ENCODE measurements at regions of chr10 and their contacts with region 1.

Region 1: GRCh38 chr10:16843252-16843870 is 26.1 kb upstream of the RSU1 start:
- DNase-seq: no peak
- ATAC-seq: peak; percentile 90
- H3K4me3 ChIP-seq: no peak overlapping the region
- H3K27ac ChIP-seq: no peak overlapping the region
- H3K4me1 ChIP-seq: no peaks in the 10 kb centered on the region
- H3K27me3 ChIP-seq: no peaks in the 10 kb centered on the region
- CTCF ChIP-seq: peak; percentile 70

Region 2: GRCh38 chr10:16986406-16987205 is 143.2 kb after region 1 on chr10:
- intact Hi-C with region 1: no loop called
- DNase-seq: no peak
- ATAC-seq: peak; percentile 33
- H3K4me3 ChIP-seq: no peak overlapping the region
- H3K27ac ChIP-seq: peak overlapping the region; percentile 47
- H3K4me1 ChIP-seq: peaks cover 9% of the 10 kb centered on the region
- H3K27me3 ChIP-seq: no peaks in the 10 kb centered on the region
- CTCF ChIP-seq: no peak

Region 3: DNA sequence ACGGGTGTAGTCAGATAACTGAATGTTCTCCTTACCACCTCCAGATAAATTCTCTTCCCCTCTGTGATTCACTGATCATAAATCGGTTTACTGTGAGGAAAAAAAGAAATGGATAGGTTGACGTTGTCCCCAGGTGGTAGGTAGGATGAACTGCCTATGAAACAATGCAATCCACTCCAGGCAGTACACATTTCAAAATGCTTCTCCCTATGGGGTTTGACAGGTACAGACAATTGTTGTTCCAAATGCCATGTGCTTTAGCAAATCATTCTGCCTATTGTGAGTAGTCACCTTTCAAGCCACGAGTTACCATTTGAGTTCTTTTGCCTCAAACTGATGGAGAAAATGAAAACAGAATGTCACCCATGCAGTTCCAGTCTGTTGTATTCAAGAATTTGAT is 406.5 kb after region 1 on chr10:
- intact Hi-C with region 1: loop called (anchors 5 kb)
- DNase-seq: no peak
- ATAC-seq: no peak
- H3K4me3 ChIP-seq: no peak overlapping the region
- H3K27ac ChIP-seq: no peak overlapping the region
- H3K4me1 ChIP-seq: no peaks in the 10 kb centered on the region
- H3K27me3 ChIP-seq: no peaks in the 10 kb centered on the region
- CTCF ChIP-seq: no peak

Measured in upper lobe of right lung (tissue), 1 donor.